T-cell (primary cell): ENCODE measurements at regions of chr6 and their contacts with region 1.

Region 1: DNA sequence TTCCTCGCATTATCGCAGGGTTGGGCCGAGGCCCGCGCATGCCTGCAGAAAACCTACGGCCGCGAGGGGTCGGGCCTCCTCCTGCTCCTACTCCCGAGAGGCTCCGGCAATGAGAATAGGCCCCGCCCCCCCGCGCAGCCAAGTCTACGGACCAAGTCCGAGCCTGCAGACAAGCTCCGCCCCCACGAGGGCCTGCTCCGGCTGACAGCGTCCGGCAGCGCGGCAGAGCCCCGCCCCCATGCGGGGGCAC is 3.1 kb upstream of the GPSM3 start:
- DNase-seq: peak; percentile 92 to 100 (median 97)
- ATAC-seq: peak; percentile 80 to 83 (median 82)
- H3K4me3 ChIP-seq: peak overlapping the region; percentile 87 to 91
- H3K4me3 Mint-ChIP-seq: peak overlapping the region; percentile 95 to 97 (median 95)
- H3K27ac ChIP-seq: peak overlapping the region; percentile 93
- H3K27ac Mint-ChIP-seq: peak overlapping the region; percentile 99
- H3K4me1 ChIP-seq: peaks cover 24 to 51% of the 10 kb centered on the region in 2 experiments
- H3K4me1 Mint-ChIP-seq: peaks cover 27 to 39% (median 37%) of the 10 kb centered on the region in 3 donors
- H3K27me3 ChIP-seq: peaks cover 0 to 3% of the 10 kb centered on the region in 2 experiments
- H3K27me3 Mint-ChIP-seq: no peaks in the 10 kb centered on the region

Region 2: GRCh38 chr6:31208506-31208905 is 987.1 kb before region 1 on chr6:
- CTCF ChIA-PET with region 1: interaction called in 1 of 2 experiments, 17 read pairs
- POLR2A ChIA-PET with region 1: no interaction called
- DNase-seq: no peak
- ATAC-seq: no peak
- H3K4me3 ChIP-seq: no peak overlapping the region
- H3K4me3 Mint-ChIP-seq: no peak overlapping the region
- H3K27ac ChIP-seq: no peak overlapping the region
- H3K27ac Mint-ChIP-seq: no peak overlapping the region
- H3K4me1 ChIP-seq: peaks cover 2 to 14% of the 10 kb centered on the region in 2 experiments
- H3K4me1 Mint-ChIP-seq: peaks cover 18 to 27% (median 21%) of the 10 kb centered on the region in 3 donors
- H3K27me3 ChIP-seq: no peaks in the 10 kb centered on the region
- H3K27me3 Mint-ChIP-seq: no peaks in the 10 kb centered on the region

Region 3: GRCh38 chr6:32853541-32854375 is 658.2 kb after region 1 on chr6 and contains the starts of genes PSMB9 and TAP1:
- CTCF ChIA-PET with region 1: no interaction called
- POLR2A ChIA-PET with region 1: interaction called in 1 of 2 experiments, 10 read pairs
- DNase-seq: peak; percentile 86 to 98 (median 95)
- ATAC-seq: peak; percentile 82 to 87 (median 85)
- H3K4me3 ChIP-seq: peak within 1 kb of the TSS; percentile 85 to 95
- H3K4me3 Mint-ChIP-seq: peak within 1 kb of the TSS; percentile 98 to 99 (median 98)
- H3K27ac ChIP-seq: peak within 1 kb of the TSS; percentile 99
- H3K27ac Mint-ChIP-seq: peak within 1 kb of the TSS; percentile 99 to 100
- H3K4me1 ChIP-seq: peaks cover 34 to 68% of the 10 kb centered on the region in 2 experiments
- H3K4me1 Mint-ChIP-seq: peaks cover 70 to 88% (median 73%) of the 10 kb centered on the region in 3 donors
- H3K27me3 ChIP-seq: no peaks in the 10 kb centered on the region
- H3K27me3 Mint-ChIP-seq: no peaks in the 10 kb centered on the region
- total RNA-seq, gene PSMB9: 110 to 173 (median 134) TPM
- total RNA-seq, gene TAP1: 117 to 163 (median 147) TPM

Region 4: GRCh38 chr6:33458676-33459075 is 1263.1 kb after region 1 on chr6:
- CTCF ChIA-PET with region 1: no interaction called
- POLR2A ChIA-PET with region 1: no interaction called
- DNase-seq: no peak
- ATAC-seq: no peak
- H3K4me3 ChIP-seq: no peak overlapping the region
- H3K4me3 Mint-ChIP-seq: no peak overlapping the region
- H3K27ac ChIP-seq: no peak overlapping the region
- H3K27ac Mint-ChIP-seq: no peak overlapping the region
- H3K4me1 ChIP-seq: peaks cover 5 to 19% of the 10 kb centered on the region in 2 experiments
- H3K4me1 Mint-ChIP-seq: peaks cover 22 to 28% (median 27%) of the 10 kb centered on the region in 3 donors
- H3K27me3 ChIP-seq: no peaks in the 10 kb centered on the region
- H3K27me3 Mint-ChIP-seq: peaks cover 0 to 2% of the 10 kb centered on the region in 2 donors